MCF 10A (cell line): ENCODE measurements at regions of chr7 and their contacts with region 1.

Region 1: GRCh38 chr7:145169942-145170341 is 334.1 kb upstream of the TPK1 start:
- DNase-seq: peak; percentile 49
- H3K4me3 Mint-ChIP-seq: no peak overlapping the region
- H3K27ac Mint-ChIP-seq: peak overlapping the region; percentile 20
- H3K4me1 Mint-ChIP-seq: peaks cover 17% of the 10 kb centered on the region
- H3K27me3 Mint-ChIP-seq: no peaks in the 10 kb centered on the region
- CTCF ChIP-seq: peak; percentile 43

Region 2: GRCh38 chr7:145036604-145037405 is 133.1 kb before region 1 on chr7:
- CTCF ChIA-PET with region 1: interaction called, 11 read pairs
- POLR2A ChIA-PET with region 1: no interaction called
- intact Hi-C with region 1: loop called (anchors 5 kb)
- DNase-seq: peak; percentile 69
- H3K4me3 Mint-ChIP-seq: peak overlapping the region; percentile 37
- H3K27ac Mint-ChIP-seq: no peak overlapping the region
- H3K4me1 Mint-ChIP-seq: no peaks in the 10 kb centered on the region
- H3K27me3 Mint-ChIP-seq: no peaks in the 10 kb centered on the region
- CTCF ChIP-seq: peak; percentile 77

Region 3: DNA sequence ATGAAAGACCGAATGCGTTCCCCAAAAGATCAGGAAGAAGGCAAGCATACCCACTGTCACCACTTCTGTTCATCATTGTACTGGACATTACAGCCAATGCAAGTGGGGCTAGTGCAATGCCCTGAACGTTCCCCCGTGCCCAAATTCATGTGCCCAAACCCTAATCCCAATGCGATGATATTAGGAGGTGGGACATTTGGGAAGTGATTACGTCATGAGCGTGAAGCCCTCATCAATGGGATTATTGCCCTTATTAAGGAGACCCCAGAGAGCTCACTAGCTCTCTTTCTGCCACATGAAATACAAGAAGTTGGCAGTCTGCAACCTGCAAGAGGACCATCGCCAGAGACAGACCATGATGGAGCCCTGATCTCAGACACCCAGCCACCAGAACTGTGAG is 177.3 kb after region 1 on chr7:
- CTCF ChIA-PET with region 1: no interaction called
- POLR2A ChIA-PET with region 1: no interaction called
- intact Hi-C with region 1: no loop called
- DNase-seq: no peak
- H3K4me3 Mint-ChIP-seq: no peak overlapping the region
- H3K27ac Mint-ChIP-seq: no peak overlapping the region
- H3K4me1 Mint-ChIP-seq: no peaks in the 10 kb centered on the region
- H3K27me3 Mint-ChIP-seq: no peaks in the 10 kb centered on the region
- CTCF ChIP-seq: no peak

Region 4: GRCh38 chr7:145520284-145520683 is 350.3 kb after region 1 on chr7:
- CTCF ChIA-PET with region 1: no interaction called
- POLR2A ChIA-PET with region 1: no interaction called
- intact Hi-C with region 1: no loop called
- DNase-seq: no peak
- H3K4me3 Mint-ChIP-seq: no peak overlapping the region
- H3K27ac Mint-ChIP-seq: no peak overlapping the region
- H3K4me1 Mint-ChIP-seq: no peaks in the 10 kb centered on the region
- H3K27me3 Mint-ChIP-seq: no peaks in the 10 kb centered on the region
- CTCF ChIP-seq: no peak

Region 5: GRCh38 chr7:145848691-145849090 is 678.7 kb after region 1 on chr7:
- CTCF ChIA-PET with region 1: interaction called, 5 read pairs
- POLR2A ChIA-PET with region 1: no interaction called
- intact Hi-C with region 1: loop called (anchors 1 kb)
- DNase-seq: peak; percentile 27
- H3K4me3 Mint-ChIP-seq: no peak overlapping the region
- H3K27ac Mint-ChIP-seq: no peak overlapping the region
- H3K4me1 Mint-ChIP-seq: no peaks in the 10 kb centered on the region
- H3K27me3 Mint-ChIP-seq: peaks cover 25% of the 10 kb centered on the region
- CTCF ChIP-seq: peak; percentile 48